ENCODE measurements at regions of chr16 and their contacts with region 1.

Region 1: DNA sequence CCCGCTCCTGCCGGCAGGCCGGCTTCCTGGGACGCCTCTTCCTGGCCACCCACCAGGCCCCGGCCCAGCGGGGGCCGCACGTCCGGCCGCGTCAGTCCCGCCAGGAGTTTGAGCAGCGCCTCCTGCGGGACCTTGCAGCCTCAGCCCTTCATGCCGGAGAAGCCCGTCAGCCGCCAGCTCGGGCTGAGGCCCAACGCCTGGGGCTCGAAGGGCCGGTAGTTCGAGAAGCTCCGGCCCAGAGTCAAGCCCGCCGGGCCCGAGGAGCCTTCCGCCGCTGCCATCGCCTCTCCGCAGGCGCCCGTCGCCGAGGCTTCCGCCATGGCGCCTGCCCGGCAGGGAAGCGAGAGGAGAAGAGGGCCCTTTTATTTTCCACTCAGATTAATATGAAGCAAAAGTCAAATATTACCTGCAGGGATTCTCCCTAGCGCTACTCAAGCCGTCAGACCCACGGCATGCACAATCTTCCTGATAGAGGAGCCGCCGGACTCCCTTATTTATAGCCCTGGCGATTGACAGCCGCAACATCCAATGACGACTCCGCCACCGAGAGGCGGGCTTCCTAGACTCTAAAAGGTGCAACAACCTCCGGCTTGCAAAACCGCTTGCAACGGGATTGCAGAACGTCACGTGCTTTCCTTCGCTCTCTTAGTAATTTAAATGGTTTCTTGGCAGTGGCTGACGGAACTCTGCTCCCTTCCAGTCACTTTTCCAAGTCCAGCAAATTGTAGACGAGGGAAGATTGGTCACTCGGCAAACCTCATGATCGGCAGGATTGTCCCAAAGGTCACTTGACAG is at the start of gene SEPHS2:
- DNase-seq: peak; percentile 100
- H3K4me3 Mint-ChIP-seq: peak within 1 kb of the TSS; percentile 87
- H3K27ac Mint-ChIP-seq: peak within 1 kb of the TSS; percentile 93
- H3K4me1 Mint-ChIP-seq: peaks cover 39% of the 10 kb centered on the region
- H3K27me3 Mint-ChIP-seq: no peaks in the 10 kb centered on the region
- total RNA-seq, gene SEPHS2: 37.8 to 39.2 TPM

Region 2: DNA sequence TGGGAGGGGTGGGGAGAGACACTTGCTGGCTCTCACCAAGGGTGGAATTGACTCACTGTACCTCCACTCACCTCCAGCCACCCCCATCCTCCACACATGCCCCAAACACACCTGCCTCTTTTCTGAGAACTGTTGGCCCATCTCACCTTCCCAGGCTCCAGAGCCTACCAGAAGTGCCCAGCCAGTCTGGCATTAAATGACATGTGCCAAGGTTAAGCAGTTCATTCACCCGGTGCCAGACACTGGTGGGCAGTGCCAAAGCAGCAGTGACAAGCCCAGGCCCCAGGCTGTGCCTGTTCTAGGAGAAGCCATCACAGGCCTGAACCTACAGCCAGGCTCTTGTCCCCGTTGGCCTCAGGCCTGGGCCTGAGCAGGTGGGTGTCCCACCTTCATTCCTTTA is 614.1 kb before region 1 on chr16:
- CTCF ChIA-PET with region 1: no interaction called
- intact Hi-C with region 1: no loop called
- DNase-seq: no peak
- H3K4me3 Mint-ChIP-seq: no peak overlapping the region
- H3K27ac Mint-ChIP-seq: no peak overlapping the region
- H3K4me1 Mint-ChIP-seq: peaks cover 57% of the 10 kb centered on the region
- H3K27me3 Mint-ChIP-seq: no peaks in the 10 kb centered on the region

Region 3: GRCh38 chr16:30065143-30065850 is 380.3 kb before region 1 on chr16 and contains the start of gene ALDOA:
- CTCF ChIA-PET with region 1: no interaction called
- intact Hi-C with region 1: loop called (anchors 1 kb)
- DNase-seq: peak; percentile 97
- H3K4me3 Mint-ChIP-seq: peak within 1 kb of the TSS; percentile 95
- H3K27ac Mint-ChIP-seq: peak within 1 kb of the TSS; percentile 98
- H3K4me1 Mint-ChIP-seq: peaks cover 32% of the 10 kb centered on the region
- H3K27me3 Mint-ChIP-seq: no peaks in the 10 kb centered on the region
- total RNA-seq, gene ALDOA: 1,750 to 1,795 TPM

Region 4: GRCh38 chr16:30472328-30472942 is 26.8 kb after region 1 on chr16 and contains the start of gene ITGAL:
- CTCF ChIA-PET with region 1: interaction called, 51 read pairs
- intact Hi-C with region 1: loop called (anchors 1 kb)
- DNase-seq: peak; percentile 95
- H3K4me3 Mint-ChIP-seq: peak within 1 kb of the TSS; percentile 92
- H3K27ac Mint-ChIP-seq: peak within 1 kb of the TSS; percentile 92
- H3K4me1 Mint-ChIP-seq: peaks cover 70% of the 10 kb centered on the region
- H3K27me3 Mint-ChIP-seq: no peaks in the 10 kb centered on the region
- total RNA-seq, gene ITGAL: 83.8 to 89.0 TPM

Region 5: DNA sequence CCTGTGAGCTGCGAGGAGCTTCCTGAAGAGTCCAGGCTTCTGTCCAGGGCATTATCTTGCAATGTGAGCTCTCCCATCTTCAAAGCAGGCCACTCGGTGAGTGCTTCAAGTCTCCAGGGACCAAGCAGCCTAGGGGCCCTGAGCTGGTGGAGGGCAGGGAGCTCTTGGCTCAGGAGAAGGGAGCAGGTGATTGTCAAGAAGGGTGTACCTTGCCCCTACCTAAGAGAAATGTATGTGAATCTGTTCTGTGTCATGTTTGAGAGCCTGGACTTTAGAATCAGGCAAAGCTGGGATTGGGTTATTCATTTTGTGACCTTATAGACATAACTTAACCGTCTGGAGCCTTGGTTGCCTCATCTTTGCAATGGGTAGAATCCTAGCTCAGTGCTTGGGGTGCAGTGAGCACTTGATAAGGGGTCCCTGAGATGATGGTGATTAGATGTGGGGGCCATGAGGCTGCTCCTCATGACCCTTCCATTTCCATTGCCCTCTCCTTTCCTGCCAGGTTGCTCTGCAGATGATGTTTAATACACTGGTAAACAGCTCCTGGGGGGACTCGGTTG is 64.9 kb after region 1 on chr16:
- CTCF ChIA-PET with region 1: interaction called, 12 read pairs
- intact Hi-C with region 1: no loop called
- DNase-seq: no peak
- H3K4me3 Mint-ChIP-seq: no peak overlapping the region
- H3K27ac Mint-ChIP-seq: peak overlapping the region; percentile 30
- H3K4me1 Mint-ChIP-seq: peaks cover 5% of the 10 kb centered on the region
- H3K27me3 Mint-ChIP-seq: no peaks in the 10 kb centered on the region

Region 6: GRCh38 chr16:30557957-30558788 is 112.6 kb after region 1 on chr16 and contains the start of gene ZNF764:
- CTCF ChIA-PET with region 1: interaction called, 10 read pairs
- intact Hi-C with region 1: no loop called
- DNase-seq: peak; percentile 99
- H3K4me3 Mint-ChIP-seq: peak within 1 kb of the TSS; percentile 84
- H3K27ac Mint-ChIP-seq: peak within 1 kb of the TSS; percentile 90
- H3K4me1 Mint-ChIP-seq: peaks cover 34% of the 10 kb centered on the region
- H3K27me3 Mint-ChIP-seq: no peaks in the 10 kb centered on the region
- total RNA-seq, gene ZNF764: 7.6 to 9.5 TPM

Region 7: DNA sequence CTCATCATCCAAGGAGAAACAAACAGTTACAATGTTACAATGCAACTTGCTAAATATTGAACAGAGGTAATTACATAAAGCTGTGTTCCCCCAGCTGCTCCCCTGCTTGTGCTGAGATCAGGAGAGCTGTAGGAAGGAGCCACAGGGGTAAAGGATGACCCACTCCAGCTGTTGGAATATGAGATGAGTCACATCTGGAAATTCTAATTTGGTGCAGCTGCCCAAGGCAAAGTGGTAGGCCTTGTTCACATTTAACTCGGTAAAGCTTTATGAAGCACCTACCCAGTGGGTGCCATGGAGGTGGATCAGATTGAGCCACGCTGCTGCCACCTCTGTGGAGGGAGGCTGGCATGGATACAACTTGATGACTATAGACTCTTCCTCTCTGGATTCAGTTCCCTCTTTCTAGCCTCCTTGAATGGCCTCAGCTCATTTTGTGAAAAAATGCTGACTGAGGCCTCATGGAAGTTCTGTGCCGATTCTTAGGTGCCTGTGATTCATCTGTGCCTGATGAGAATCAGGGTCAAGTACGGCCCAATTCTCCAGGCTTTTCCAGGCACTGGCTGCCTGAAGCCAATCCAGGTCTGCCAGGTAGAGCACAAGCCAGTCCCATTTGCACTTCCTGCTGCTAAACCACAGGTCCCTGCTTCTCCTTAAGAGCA is 157.1 kb after region 1 on chr16:
- CTCF ChIA-PET with region 1: interaction called, 35 read pairs
- intact Hi-C with region 1: loop called (anchors 1 kb)
- DNase-seq: no peak
- H3K4me3 Mint-ChIP-seq: no peak overlapping the region
- H3K27ac Mint-ChIP-seq: no peak overlapping the region
- H3K4me1 Mint-ChIP-seq: peaks cover 10% of the 10 kb centered on the region
- H3K27me3 Mint-ChIP-seq: no peaks in the 10 kb centered on the region

Measured in activated naive CD4-positive, alpha-beta T cell treated with anti-CD3 and anti-CD28 coated beads for 36 hours (primary cell).